Esophagus muscularis mucosa (tissue), 4 donors: ENCODE measurements at regions of chr7 and their contacts with region 1.

Region 1: GRCh38 chr7:149422129-149422913 is 38.5 kb downstream of the ZNF777 start:
- DNase-seq: peak; percentile 89
- H3K4me3 ChIP-seq: peak overlapping the region; percentile 52 to 57 (median 56)
- H3K27ac ChIP-seq: peak overlapping the region in 2 of 4 donors; percentile 26 to 29
- H3K4me1 ChIP-seq: peaks cover 12 to 19% (median 16%) of the 10 kb centered on the region in 4 donors
- H3K27me3 ChIP-seq: peaks cover 0 to 5% (median 2%) of the 10 kb centered on the region in 4 donors
- CTCF ChIP-seq: peak; percentile 45 to 67 (median 65)
- EP300 ChIP-seq: no peak
- POLR2A ChIP-seq: no peak

Region 2: DNA sequence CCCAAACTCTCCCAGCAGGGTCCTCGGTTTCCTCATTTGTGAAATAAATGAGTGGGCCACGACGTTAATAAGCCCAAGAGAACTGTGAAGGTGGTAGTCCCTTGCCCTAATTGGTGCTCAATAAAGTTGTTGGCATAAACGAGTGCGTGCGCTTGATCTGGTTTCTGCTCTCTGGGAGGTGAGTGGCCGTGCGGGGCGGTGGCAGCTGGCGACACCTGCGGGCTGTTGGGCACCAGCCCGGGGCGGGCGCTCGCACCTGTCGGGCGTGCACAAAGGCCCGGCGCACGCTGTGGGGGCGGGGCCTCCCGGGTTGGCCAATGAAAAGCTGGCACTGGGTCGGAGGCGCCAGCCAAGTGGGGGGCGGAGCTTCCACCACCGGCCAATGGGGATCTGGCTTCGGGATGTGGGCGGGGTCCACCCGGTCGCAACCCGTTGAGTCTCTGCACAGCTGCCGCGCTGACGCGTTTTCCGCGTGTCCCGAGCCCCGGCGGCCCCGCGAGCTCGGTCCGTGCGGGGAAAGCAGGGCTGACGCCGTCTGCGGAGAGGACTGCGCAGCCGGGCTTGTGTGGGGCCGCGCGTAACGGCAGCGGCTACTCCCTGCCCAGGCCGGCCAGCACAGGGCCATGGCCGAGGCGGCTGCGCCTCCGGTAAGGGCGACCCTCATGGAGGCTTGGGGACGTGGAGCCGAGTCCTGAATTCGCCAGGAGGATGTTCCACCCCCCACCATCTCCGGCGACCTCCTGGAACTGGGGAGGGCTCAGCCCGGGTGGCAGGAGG is 137.3 kb before region 1 on chr7:
- intact Hi-C with region 1: loop called (anchors 10 kb)
- DNase-seq: peak; percentile 99
- H3K4me3 ChIP-seq: peak overlapping the region; percentile 61 to 73 (median 66)
- H3K27ac ChIP-seq: peak overlapping the region; percentile 57 to 70 (median 64)
- H3K4me1 ChIP-seq: peaks cover 8 to 20% (median 18%) of the 10 kb centered on the region in 4 donors
- H3K27me3 ChIP-seq: no peaks in the 10 kb centered on the region
- CTCF ChIP-seq: no peak
- EP300 ChIP-seq: no peak
- POLR2A ChIP-seq: no peak

Region 3: DNA sequence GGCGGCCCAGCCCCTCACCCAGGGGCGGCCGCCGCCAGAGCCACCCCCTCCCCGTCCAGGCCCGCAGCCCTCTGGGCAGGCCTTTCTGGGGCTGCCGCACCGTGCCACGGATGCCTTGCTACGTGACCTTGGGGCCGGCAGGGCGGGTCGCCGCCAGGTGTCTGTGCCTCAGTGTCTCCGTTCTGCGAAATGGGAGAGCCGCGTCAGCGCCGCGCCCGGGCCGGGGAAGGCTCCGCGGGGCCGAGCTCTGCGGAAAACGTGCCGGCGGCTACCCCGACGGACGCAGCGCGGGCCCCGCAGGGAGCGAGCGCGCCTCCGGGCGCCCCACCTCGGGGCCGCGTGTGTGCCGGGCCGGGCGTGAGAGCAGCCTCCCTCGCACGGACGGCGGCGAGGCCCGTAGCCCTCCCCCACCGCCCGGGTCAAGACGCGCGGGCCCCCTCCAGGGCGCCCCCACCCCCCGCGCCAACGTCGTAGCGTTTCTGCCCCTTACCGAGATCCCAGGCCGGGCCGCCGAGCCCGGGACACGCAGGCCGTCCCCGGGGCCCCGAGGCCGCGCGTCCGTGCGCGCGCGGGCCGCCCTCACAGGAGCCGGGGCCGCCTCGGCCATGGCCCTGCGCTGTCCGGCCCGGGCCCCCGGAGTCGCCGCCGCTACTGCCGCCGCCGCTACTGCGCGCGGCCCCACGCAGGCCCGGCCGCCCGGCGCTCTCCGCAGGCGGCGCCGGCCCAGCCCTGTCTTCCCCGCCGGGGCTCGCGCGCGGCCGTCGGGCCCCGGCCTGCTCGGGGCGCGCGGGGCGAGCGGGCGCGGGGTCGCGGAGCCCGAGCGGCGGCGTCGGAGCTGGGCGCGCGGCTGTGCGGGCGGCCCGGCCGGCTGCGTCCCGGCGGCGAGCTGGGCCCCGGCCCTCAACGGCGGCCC is 37.5 kb after region 1 on chr7:
- intact Hi-C with region 1: loop called (anchors 5 kb)
- DNase-seq: peak; percentile 78
- H3K4me3 ChIP-seq: peak overlapping the region; percentile 66 to 88 (median 80)
- H3K27ac ChIP-seq: peak overlapping the region; percentile 40 to 89 (median 80)
- H3K4me1 ChIP-seq: peaks cover 17 to 37% (median 28%) of the 10 kb centered on the region in 4 donors
- H3K27me3 ChIP-seq: no peaks in the 10 kb centered on the region
- CTCF ChIP-seq: no peak
- EP300 ChIP-seq: no peak
- POLR2A ChIP-seq: no peak

Region 4: GRCh38 chr7:149497456-149498261 is 75.3 kb after region 1 on chr7 and contains the start of gene ZNF746:
- intact Hi-C with region 1: loop called (anchors 5 kb)
- DNase-seq: peak; percentile 92
- H3K4me3 ChIP-seq: peak within 1 kb of the TSS; percentile 82 to 95 (median 88)
- H3K27ac ChIP-seq: peak within 1 kb of the TSS; percentile 91 to 94 (median 94)
- H3K4me1 ChIP-seq: peaks cover 18 to 32% (median 31%) of the 10 kb centered on the region in 4 donors
- H3K27me3 ChIP-seq: peaks cover 0 to 8% (median 0%) of the 10 kb centered on the region in 4 donors
- CTCF ChIP-seq: peak; percentile 41 to 79 (median 78)
- EP300 ChIP-seq: no peak
- POLR2A ChIP-seq: no peak
- total RNA-seq, gene ZNF746: 20.9 to 28.7 (median 27.9) TPM

Region 5: DNA sequence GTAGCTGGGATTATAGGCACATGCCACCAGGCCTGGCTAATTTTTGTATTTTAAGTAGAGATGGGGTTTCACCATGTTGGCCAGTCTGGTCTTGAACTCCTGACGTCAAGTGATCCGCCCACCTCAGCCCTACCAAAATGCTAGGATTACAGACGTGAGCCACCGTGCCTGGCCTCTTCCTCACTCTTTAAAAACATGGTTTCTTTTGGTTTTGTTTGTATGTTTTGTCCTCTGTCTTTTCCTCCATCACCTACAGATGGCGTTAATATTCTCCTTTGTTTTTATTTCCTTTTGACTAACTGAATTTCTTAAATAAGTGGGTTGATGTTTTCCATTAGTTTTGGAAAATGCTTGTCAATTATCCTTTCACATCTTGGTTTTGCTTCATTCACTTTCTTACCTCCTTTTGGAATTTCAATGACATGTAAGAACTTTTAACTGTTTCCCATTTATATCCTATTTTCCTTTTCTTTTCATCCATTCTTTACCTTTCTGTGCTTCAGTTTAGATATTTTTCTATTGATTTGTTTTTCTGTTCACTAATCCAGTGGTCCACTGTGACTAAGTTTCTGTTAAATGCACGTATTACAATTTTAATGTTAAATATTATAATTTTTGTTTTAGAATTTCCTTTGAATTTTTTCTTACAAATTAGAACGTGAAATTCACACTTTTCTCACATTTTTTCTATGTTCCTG is 246.9 kb after region 1 on chr7:
- intact Hi-C with region 1: no loop called
- DNase-seq: no peak
- H3K4me3 ChIP-seq: no peak overlapping the region
- H3K27ac ChIP-seq: no peak overlapping the region
- H3K4me1 ChIP-seq: peaks cover 0 to 14% (median 11%) of the 10 kb centered on the region in 4 donors
- H3K27me3 ChIP-seq: no peaks in the 10 kb centered on the region
- CTCF ChIP-seq: peak in 2 of 3 experiments; percentile 9 to 39
- EP300 ChIP-seq: no peak
- POLR2A ChIP-seq: no peak